Calu3 (cell line): ENCODE measurements at regions of chr2 and their contacts with region 1.

Region 1: GRCh38 chr2:10597935-10598334 is 91.8 kb downstream of the NOL10 start:
- DNase-seq: no peak
- H3K4me3 Mint-ChIP-seq: no peak overlapping the region
- H3K27ac Mint-ChIP-seq: no peak overlapping the region
- H3K4me1 Mint-ChIP-seq: peaks cover 17% of the 10 kb centered on the region
- H3K27me3 Mint-ChIP-seq: no peaks in the 10 kb centered on the region
- CTCF ChIP-seq: no peak

Region 2: DNA sequence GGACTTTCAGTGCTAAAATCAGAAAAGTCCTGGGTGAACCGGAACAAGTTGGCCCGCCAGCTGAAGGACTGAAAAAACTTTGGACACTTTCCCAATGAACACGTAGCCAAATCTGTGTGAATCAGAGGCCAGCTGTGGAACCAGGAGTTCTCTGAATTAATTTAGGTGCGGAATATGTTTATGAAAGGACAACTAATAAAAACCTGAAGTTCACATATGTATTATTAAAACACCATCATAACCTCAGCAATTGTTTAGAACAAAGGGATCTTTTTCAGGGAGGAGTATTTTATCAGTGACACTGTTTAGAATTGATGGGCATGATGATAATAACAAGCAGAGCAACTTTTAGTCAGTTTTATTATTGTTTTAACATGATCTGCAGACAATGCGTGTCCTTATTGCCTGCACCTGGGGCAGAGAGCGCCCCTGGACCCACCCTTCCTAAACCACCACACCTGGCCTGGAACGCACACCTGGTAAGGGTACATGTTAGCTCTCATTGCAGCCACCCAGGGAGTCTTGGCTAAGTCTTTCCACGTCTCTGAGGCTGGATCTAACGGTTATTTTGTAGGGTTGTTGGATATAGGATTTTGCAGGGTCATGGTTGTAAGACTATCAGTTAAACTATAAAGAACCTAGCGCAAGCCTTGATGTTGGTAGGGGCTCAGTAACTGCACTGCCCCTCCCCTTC is 139.9 kb before region 1 on chr2:
- CTCF ChIA-PET with region 1: no interaction called
- intact Hi-C with region 1: no loop called
- DNase-seq: no peak
- H3K4me3 Mint-ChIP-seq: no peak overlapping the region
- H3K27ac Mint-ChIP-seq: no peak overlapping the region
- H3K4me1 Mint-ChIP-seq: peaks cover 18% of the 10 kb centered on the region
- H3K27me3 Mint-ChIP-seq: peaks cover 19% of the 10 kb centered on the region
- CTCF ChIP-seq: no peak

Region 3: GRCh38 chr2:10647886-10648605 is 50.1 kb after region 1 on chr2:
- CTCF ChIA-PET with region 1: no interaction called
- intact Hi-C with region 1: loop called (anchors 5 kb)
- DNase-seq: no peak
- H3K4me3 Mint-ChIP-seq: no peak overlapping the region
- H3K27ac Mint-ChIP-seq: no peak overlapping the region
- H3K4me1 Mint-ChIP-seq: peaks cover 10% of the 10 kb centered on the region
- H3K27me3 Mint-ChIP-seq: no peaks in the 10 kb centered on the region
- CTCF ChIP-seq: no peak